AG04450 (cell line): ENCODE measurements at regions of chr1 and their contacts with region 1.

Region 1: GRCh38 chr1:196660852-196661251 is 9.0 kb downstream of the CFH start:
- DNase-seq: peak; percentile 6
- H3K4me3 ChIP-seq: no peak overlapping the region
- H3K27ac ChIP-seq: no peak overlapping the region
- H3K27me3 ChIP-seq: no peaks in the 10 kb centered on the region
- CTCF ChIP-seq: peak; percentile 53

Region 2: DNA sequence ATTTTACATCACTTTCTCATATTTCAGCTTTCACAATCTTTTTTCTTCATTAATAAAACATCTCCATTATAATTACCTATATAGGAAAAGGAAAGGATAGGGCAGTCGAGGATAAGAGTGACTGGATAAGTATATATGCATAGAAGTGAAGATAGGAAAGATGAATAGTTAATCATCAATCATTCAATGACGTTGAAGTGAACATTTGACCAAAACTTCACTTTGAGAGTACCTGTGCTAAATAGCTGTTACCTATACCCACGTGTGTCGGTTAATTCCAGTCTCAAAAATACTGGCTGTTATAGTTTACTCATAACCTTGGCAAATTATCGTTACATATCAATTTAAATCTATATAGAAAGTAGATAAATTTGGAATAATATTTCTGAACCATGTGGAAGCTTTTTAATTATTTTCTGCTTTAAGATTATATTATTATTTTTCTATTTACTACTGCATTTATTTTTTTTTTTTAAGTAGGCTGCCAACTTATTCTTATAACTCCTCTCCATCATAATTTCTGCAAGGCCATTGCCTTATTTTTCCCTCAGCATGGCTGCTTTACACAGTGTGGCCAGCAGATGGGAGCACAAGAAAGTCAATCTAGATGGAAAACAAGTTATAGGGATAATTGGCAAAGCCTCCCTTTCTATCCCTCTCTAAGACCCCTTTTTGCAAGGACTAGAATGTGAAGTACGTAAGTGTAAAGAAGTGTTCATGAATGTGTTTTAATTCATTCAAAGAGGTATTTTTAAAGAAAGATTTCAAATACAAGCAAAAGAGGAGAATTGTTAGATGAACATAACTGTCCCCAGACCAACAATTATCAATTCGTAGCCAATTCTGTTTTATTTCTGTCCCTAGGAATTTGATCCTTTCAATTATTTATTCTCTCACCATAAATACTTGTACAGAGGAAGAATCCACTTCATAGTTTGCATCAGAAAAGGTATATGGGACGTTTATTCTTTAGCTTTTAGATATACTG is 343.0 kb before region 1 on chr1:
- CTCF ChIA-PET with region 1: interaction called, 130 read pairs
- POLR2A ChIA-PET with region 1: no interaction called
- DNase-seq: peak; percentile 15
- H3K4me3 ChIP-seq: no peak overlapping the region
- H3K27ac ChIP-seq: no peak overlapping the region
- H3K27me3 ChIP-seq: no peaks in the 10 kb centered on the region
- CTCF ChIP-seq: peak; percentile 77

Region 3: GRCh38 chr1:196344453-196344852 is 316.4 kb before region 1 on chr1:
- CTCF ChIA-PET with region 1: interaction called, 16 read pairs
- POLR2A ChIA-PET with region 1: no interaction called
- DNase-seq: no peak
- H3K4me3 ChIP-seq: no peak overlapping the region
- H3K27ac ChIP-seq: no peak overlapping the region
- H3K27me3 ChIP-seq: no peaks in the 10 kb centered on the region
- CTCF ChIP-seq: no peak

Region 4: GRCh38 chr1:196355206-196355786 is 305.6 kb before region 1 on chr1:
- CTCF ChIA-PET with region 1: interaction called, 117 read pairs
- POLR2A ChIA-PET with region 1: no interaction called
- DNase-seq: no peak
- H3K4me3 ChIP-seq: no peak overlapping the region
- H3K27ac ChIP-seq: no peak overlapping the region
- H3K27me3 ChIP-seq: no peaks in the 10 kb centered on the region
- CTCF ChIP-seq: peak; percentile 67

Region 5: GRCh38 chr1:196628838-196629237 is 32.0 kb before region 1 on chr1:
- CTCF ChIA-PET with region 1: no interaction called
- POLR2A ChIA-PET with region 1: no interaction called
- DNase-seq: no peak
- H3K4me3 ChIP-seq: no peak overlapping the region
- H3K27ac ChIP-seq: no peak overlapping the region
- H3K27me3 ChIP-seq: no peaks in the 10 kb centered on the region
- CTCF ChIP-seq: no peak

Region 6: DNA sequence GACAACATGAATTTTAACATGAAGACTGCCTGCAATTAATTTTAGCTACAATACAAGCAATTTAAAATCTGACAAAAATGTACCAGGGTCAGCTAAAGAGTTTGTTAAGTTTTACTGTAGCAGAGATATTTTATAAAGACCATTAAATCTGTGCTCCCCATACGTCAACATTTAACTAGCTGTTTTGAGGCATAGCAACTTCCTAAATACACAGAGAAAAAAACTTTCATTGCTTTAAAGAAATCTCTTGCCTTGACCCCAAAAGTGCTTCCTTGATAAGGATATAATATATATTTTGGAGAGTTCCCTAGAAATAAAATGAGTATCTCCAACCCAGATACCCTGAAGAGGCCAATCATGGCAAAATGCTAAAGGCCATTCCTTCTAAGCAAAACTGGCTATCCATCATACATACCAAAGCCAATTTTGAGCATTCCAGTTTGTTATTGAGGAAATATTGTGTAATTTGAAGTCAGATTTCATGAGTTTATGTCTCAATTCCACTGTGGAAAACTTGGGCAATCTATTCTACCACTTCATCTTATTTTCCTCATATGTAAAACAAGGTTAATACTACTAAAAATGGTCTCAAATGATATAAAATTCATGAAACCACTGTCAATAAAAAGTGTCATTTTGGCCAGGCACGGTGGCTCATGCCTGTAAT is 466.5 kb after region 1 on chr1:
- CTCF ChIA-PET with region 1: no interaction called
- POLR2A ChIA-PET with region 1: no interaction called
- DNase-seq: no peak
- H3K4me3 ChIP-seq: no peak overlapping the region
- H3K27ac ChIP-seq: no peak overlapping the region
- H3K27me3 ChIP-seq: no peaks in the 10 kb centered on the region
- CTCF ChIP-seq: no peak